ENCODE measurements at regions of chr2 and their contacts with region 1.

Region 1: GRCh38 chr2:158998551-158999248 is 30.3 kb downstream of the TANC1 start:
- DNase-seq: peak; percentile 7
- H3K4me3 ChIP-seq: no peak overlapping the region
- CTCF ChIP-seq: no peak

Region 2: GRCh38 chr2:158984604-158985135 is 14.0 kb before region 1 on chr2:
- CTCF ChIA-PET with region 1: interaction called, 24 read pairs
- POLR2A ChIA-PET with region 1: no interaction called
- DNase-seq: no peak
- H3K4me3 ChIP-seq: no peak overlapping the region
- CTCF ChIP-seq: no peak

Region 3: DNA sequence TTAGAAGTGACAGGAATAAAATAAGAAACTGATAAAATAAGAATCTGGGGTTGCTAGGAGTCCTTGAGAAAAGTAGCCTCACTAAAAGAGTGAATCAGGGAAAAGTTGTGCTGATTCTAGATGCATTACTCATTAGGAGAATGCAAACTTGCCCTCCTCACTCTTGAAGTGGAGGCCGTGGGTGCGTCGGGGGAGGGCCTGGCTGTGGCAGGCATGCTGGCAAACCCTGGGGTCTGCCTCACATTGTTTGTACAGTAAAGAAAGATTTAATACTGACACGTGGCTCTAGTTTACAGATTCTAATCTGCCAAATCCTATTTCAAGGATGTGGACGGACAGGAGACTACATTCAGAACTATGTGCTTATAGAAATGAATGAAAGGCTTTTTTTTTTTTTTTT is 11.6 kb after region 1 on chr2:
- CTCF ChIA-PET with region 1: interaction called, 14 read pairs
- POLR2A ChIA-PET with region 1: no interaction called
- DNase-seq: no peak
- H3K4me3 ChIP-seq: no peak overlapping the region
- CTCF ChIP-seq: no peak

Measured in AG04449 (cell line).